GM12878 (cell line): ENCODE measurements at regions of chr9 and their contacts with region 1.

Region 1: GRCh38 chr9:123187131-123187530 is 81.3 kb downstream of the STRBP start:
- DNase-seq: no peak
- ATAC-seq: no peak; the same call in 2 of the 3 replicates
- H3K4me3 ChIP-seq: no peak overlapping the region
- H3K27ac ChIP-seq: no peak overlapping the region
- H3K4me1 ChIP-seq: no peaks in the 10 kb centered on the region
- H3K27me3 ChIP-seq: no peaks in the 10 kb centered on the region
- CTCF ChIP-seq: no peak
- EP300 ChIP-seq: no peak
- POLR2A ChIP-seq: no peak
- RAD21 ChIP-seq: no peak

Region 2: DNA sequence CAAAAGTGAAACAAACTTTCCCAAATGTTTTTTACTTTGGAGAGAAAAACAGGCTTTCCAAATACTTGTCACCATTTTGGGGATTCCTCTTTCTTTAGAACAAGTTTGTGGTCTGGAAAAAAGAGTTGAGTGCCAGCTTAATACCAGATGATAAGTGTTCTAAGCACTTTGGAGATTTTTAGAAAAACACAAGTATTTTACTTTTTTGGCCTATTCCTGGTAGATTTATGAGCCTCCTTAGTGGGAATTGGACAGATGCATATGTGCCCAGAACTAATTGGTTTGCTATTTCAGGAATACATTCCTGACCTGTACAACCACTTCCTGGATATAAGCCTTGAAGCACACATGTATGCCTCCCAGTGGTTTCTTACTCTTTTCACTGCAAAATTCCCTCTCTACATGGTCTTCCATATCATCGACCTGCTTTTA is 113.1 kb before region 1 on chr9:
- CTCF ChIA-PET with region 1: no interaction called
- POLR2A ChIA-PET with region 1: interaction called, 12 read pairs
- RAD21 ChIA-PET with region 1: no interaction called
- SMC1A ChIA-PET with region 1: no interaction called
- in situ Hi-C with region 1: no loop called
- intact Hi-C with region 1: no loop called
- DNase-seq: no peak
- ATAC-seq: no peak
- H3K4me3 ChIP-seq: no peak overlapping the region
- H3K27ac ChIP-seq: no peak overlapping the region
- H3K4me1 ChIP-seq: peaks cover 5% of the 10 kb centered on the region; the same call in 1 of the 2 replicates
- H3K27me3 ChIP-seq: no peaks in the 10 kb centered on the region
- CTCF ChIP-seq: no peak
- EP300 ChIP-seq: no peak
- POLR2A ChIP-seq: no peak
- RAD21 ChIP-seq: no peak

Region 3: GRCh38 chr9:123099042-123099441 is 88.1 kb before region 1 on chr9:
- CTCF ChIA-PET with region 1: no interaction called
- POLR2A ChIA-PET with region 1: no interaction called
- RAD21 ChIA-PET with region 1: no interaction called
- SMC1A ChIA-PET with region 1: no interaction called
- in situ Hi-C with region 1: no loop called
- intact Hi-C with region 1: no loop called
- DNase-seq: no peak
- ATAC-seq: no peak
- H3K4me3 ChIP-seq: no peak overlapping the region
- H3K27ac ChIP-seq: no peak overlapping the region
- H3K4me1 ChIP-seq: peaks cover 8% of the 10 kb centered on the region
- H3K27me3 ChIP-seq: no peaks in the 10 kb centered on the region
- CTCF ChIP-seq: no peak
- EP300 ChIP-seq: no peak
- POLR2A ChIP-seq: no peak
- RAD21 ChIP-seq: no peak